Activated T-helper 1 cell treated with anti-CD3 and anti-CD28 coated beads, Interleukin-12 subunit alpha, Interleukin-12 subunit beta, Interleukin-2, Interleukin-4 antibody, amounts not matched to agents 30 ng/mL and 10 ng/mL and 1 ng/mL, durations not matched to agents 14 hours and 24 hours and 36 hours (primary cell): ENCODE measurements at regions of chr3 and their contacts with region 1.

Region 1: DNA sequence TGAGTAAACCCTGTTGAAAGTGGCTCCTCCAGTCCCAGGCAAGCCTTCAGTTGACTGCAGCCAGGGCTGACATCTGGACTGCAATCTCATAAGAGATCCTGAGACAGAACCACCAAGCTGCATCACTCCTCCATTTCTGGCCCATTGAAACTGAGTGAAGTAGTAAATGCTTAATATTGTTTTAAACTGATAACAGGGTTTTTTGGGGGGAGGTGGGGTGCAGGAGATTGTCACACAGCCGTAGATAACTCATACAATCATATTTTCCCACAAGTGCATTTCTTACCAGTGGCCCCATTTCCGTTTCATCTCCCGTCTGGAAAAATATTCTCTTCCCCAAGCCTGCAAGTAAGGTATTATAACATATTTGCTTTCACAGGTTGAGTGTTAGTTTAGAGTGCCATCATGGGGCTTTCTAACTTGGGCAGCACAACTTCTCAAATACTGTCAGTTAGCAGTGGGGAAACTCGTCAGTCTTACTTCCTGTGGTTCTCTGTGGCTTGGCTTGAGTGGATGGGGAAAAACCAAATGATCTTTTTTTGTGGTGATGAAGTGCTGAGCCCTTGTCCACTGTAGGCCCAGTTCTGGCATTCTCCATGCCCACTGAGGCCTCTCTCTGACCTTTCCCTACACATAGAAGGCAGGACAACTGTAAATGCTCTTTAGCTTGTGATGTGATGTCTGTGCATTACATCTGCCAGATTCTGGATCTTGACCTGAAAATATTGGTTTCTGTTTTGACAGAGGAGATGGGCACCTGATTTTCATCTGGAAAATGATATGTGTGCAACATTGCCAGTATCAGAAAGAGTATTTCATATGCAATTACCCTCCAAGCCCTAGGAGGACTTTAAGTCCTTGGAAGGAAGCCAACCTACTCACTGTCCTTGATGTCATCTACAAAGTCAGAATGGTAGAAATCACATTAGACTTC is 90.1 kb upstream of the BHLHE40 start:
- DNase-seq: peak; percentile 50
- H3K4me3 Mint-ChIP-seq: peak overlapping the region; percentile 58
- H3K27ac Mint-ChIP-seq: peak overlapping the region; percentile 88
- H3K4me1 Mint-ChIP-seq: peaks cover 59% of the 10 kb centered on the region
- H3K27me3 Mint-ChIP-seq: no peaks in the 10 kb centered on the region

Region 2: GRCh38 chr3:4741404-4742307 is 147.5 kb before region 1 on chr3:
- intact Hi-C with region 1: loop called (anchors 5 kb)
- DNase-seq: no peak
- H3K4me3 Mint-ChIP-seq: peak overlapping the region; percentile 74
- H3K27ac Mint-ChIP-seq: peak overlapping the region; percentile 89
- H3K4me1 Mint-ChIP-seq: peaks cover 79% of the 10 kb centered on the region
- H3K27me3 Mint-ChIP-seq: no peaks in the 10 kb centered on the region

Region 3: DNA sequence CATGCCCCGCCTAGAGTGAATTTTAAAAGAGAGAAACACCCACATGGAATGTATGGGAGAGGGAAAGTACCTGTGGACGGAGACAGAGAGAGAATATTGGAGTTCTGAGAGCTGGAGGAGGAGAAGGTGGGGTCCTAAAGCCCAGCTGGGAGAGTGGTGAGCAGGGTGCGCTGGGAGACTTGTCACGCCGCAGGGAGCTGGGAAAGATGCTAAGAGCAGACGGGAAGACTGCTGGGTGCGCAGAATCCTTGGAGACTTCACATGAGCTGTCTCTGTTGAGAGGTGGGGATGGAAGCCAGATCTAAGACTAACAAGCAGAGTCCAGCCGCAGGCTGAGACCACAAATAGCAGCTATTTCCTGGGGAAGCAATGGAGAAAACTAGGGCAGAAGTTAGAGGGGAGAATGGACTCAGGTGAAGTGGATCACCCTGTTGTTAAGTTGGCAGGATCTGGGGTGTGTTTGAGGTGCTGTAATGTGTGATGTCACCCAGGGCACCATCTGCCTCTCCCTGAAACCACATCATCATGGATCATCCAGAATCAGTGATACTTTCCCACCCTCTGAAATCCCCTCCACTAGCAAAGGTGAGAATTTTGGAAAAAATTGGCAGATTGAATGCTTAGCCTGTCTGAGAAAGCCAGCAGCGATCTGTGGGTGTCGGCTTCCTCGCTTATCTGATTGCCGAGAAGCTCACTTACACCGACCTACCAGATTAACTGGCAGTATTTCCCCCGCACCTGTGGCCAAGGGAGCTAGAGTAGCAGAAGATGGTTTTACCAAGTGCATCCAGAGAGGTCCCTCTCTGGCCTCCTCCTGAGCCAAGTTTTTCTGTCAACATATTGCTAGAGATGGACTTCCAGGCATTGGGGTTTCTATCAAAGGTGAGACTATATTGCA is 84.8 kb before region 1 on chr3:
- intact Hi-C with region 1: loop called (anchors 1 kb)
- DNase-seq: no peak
- H3K4me3 Mint-ChIP-seq: no peak overlapping the region
- H3K27ac Mint-ChIP-seq: peak overlapping the region; percentile 76
- H3K4me1 Mint-ChIP-seq: peaks cover 59% of the 10 kb centered on the region
- H3K27me3 Mint-ChIP-seq: no peaks in the 10 kb centered on the region

Region 4: GRCh38 chr3:4845882-4846281 is 43.3 kb before region 1 on chr3:
- intact Hi-C with region 1: loop called (anchors 1 kb)
- DNase-seq: no peak
- H3K4me3 Mint-ChIP-seq: peak overlapping the region; percentile 64
- H3K27ac Mint-ChIP-seq: peak overlapping the region; percentile 95
- H3K4me1 Mint-ChIP-seq: peaks cover 96% of the 10 kb centered on the region
- H3K27me3 Mint-ChIP-seq: no peaks in the 10 kb centered on the region

Region 5: DNA sequence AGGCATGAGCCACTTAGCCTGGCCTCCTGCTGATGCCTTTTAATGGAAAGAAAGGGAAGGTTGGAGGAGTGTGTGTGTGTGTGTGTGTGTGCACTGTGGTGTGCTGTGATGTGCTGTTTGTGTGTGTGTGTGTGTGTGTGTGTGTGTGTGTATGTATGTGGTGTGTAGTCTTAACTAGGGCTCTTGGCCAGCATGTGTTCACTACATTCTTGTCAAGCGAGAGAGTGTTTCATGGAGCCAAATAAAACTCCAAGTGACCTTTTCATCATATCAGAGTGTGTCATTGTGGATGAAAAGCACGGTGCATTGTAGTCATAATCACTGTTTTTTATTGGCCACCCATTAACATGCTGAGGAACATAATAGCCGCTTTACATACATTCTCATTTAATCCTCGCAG is 59.2 kb after region 1 on chr3:
- intact Hi-C with region 1: no loop called
- DNase-seq: no peak
- H3K4me3 Mint-ChIP-seq: no peak overlapping the region
- H3K27ac Mint-ChIP-seq: no peak overlapping the region
- H3K4me1 Mint-ChIP-seq: peaks cover 8% of the 10 kb centered on the region
- H3K27me3 Mint-ChIP-seq: no peaks in the 10 kb centered on the region

Region 6: GRCh38 chr3:5006755-5007202 is 117.6 kb after region 1 on chr3:
- intact Hi-C with region 1: loop called (anchors 1 kb)
- DNase-seq: peak; percentile 88
- H3K4me3 Mint-ChIP-seq: peak overlapping the region; percentile 71
- H3K27ac Mint-ChIP-seq: peak overlapping the region; percentile 89
- H3K4me1 Mint-ChIP-seq: peaks cover 72% of the 10 kb centered on the region
- H3K27me3 Mint-ChIP-seq: no peaks in the 10 kb centered on the region